ENCODE measurements at regions of chr15 and their contacts with region 1.

Region 1: DNA sequence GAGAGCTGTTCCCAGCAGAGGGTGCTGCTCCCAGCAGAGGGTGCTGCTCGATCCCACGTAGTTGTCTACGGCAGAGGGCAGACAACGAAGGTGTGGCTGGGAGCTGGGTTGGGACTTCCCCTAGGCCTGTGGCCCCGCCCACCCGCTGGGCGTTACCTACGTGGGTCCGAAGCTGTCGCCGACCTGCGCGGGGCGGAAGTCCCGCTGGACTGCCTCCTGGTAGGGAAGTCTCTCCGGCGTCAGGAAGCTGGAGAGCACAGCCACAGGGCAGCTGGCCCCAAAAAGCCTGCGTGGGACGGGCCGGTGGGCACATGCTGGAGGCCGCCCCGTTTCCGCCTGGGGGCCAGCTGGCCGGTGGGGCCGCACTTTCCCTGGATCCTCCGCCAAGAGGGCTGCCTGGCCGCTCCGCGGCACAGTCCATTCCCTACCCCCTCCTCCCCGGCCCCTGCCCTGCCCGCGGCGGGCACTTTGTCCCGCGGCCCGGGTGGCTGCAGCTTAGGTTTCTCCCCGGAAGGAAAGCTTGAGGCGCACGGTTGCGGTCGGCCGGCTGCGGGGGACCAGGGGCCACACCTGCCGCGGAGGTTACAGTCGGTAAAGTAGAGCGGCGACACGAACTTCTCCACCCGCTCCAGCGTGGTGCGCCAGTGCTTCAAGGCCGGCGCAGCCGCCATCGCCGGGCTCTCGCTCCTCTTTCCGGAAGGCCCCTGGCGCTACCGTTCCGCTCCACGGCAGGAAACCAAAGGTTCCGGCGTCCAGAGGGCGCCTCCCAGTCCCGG is at the start of gene MAN2C1:
- DNase-seq: peak; percentile 97
- ATAC-seq: peak; percentile 94
- H3K4me3 Mint-ChIP-seq: peak within 1 kb of the TSS; percentile 86
- H3K27ac Mint-ChIP-seq: peak within 1 kb of the TSS; percentile 95
- H3K4me1 Mint-ChIP-seq: peaks cover 26% of the 10 kb centered on the region
- H3K27me3 Mint-ChIP-seq: no peaks in the 10 kb centered on the region
- total RNA-seq, gene MAN2C1: 119 to 181 TPM

Region 2: GRCh38 chr15:75335705-75336355 is 32.3 kb before region 1 on chr15 and contains the start of gene COMMD4:
- CTCF ChIA-PET with region 1: interaction called, 10 read pairs
- POLR2A ChIA-PET with region 1: no interaction called
- intact Hi-C with region 1: loop called in 1 of 2 experiments (anchors 1 kb)
- DNase-seq: peak; percentile 95
- ATAC-seq: peak; percentile 88
- H3K4me3 Mint-ChIP-seq: peak within 1 kb of the TSS; percentile 94
- H3K27ac Mint-ChIP-seq: peak within 1 kb of the TSS; percentile 88
- H3K4me1 Mint-ChIP-seq: peaks cover 12% of the 10 kb centered on the region
- H3K27me3 Mint-ChIP-seq: no peaks in the 10 kb centered on the region
- total RNA-seq, gene COMMD4: 47.1 to 67.8 TPM

Region 3: DNA sequence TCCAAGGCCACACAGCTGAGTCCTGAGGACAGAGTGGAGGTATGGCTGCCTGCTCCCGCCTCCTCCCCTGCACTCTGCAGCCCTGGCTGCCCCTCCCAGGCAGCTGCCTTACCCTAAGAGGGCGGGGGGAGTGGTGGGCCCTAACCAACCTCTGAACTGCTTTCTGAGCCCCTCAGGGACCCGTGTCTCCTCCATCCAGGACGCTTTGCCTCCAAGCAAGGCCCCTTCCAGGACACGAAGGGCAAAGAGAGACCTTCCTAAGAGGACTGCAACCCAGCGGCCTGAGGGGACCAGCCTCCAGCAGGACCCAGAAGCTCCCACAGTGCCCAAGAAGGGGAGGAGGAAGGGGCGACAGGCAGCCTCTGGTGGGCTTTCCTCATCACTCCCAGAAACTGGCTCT is 13.6 kb before region 1 on chr15:
- CTCF ChIA-PET with region 1: interaction called, 10 read pairs
- POLR2A ChIA-PET with region 1: interaction called, 8 read pairs
- intact Hi-C with region 1: no loop called
- DNase-seq: no peak
- ATAC-seq: no peak
- H3K4me3 Mint-ChIP-seq: no peak overlapping the region
- H3K27ac Mint-ChIP-seq: no peak overlapping the region
- H3K4me1 Mint-ChIP-seq: peaks cover 16% of the 10 kb centered on the region
- H3K27me3 Mint-ChIP-seq: no peaks in the 10 kb centered on the region

Region 4: GRCh38 chr15:75578948-75579920 is 211.1 kb after region 1 on chr15 and contains the start of gene PTPN9:
- CTCF ChIA-PET with region 1: interaction called, 3 read pairs
- POLR2A ChIA-PET with region 1: no interaction called
- intact Hi-C with region 1: loop called in 1 of 2 experiments (anchors 1 kb)
- DNase-seq: peak; percentile 88
- ATAC-seq: peak; percentile 80
- H3K4me3 Mint-ChIP-seq: peak within 1 kb of the TSS; percentile 87
- H3K27ac Mint-ChIP-seq: peak within 1 kb of the TSS; percentile 94
- H3K4me1 Mint-ChIP-seq: peaks cover 13% of the 10 kb centered on the region
- H3K27me3 Mint-ChIP-seq: no peaks in the 10 kb centered on the region
- total RNA-seq, gene PTPN9: 15.0 to 16.5 TPM

Region 5: DNA sequence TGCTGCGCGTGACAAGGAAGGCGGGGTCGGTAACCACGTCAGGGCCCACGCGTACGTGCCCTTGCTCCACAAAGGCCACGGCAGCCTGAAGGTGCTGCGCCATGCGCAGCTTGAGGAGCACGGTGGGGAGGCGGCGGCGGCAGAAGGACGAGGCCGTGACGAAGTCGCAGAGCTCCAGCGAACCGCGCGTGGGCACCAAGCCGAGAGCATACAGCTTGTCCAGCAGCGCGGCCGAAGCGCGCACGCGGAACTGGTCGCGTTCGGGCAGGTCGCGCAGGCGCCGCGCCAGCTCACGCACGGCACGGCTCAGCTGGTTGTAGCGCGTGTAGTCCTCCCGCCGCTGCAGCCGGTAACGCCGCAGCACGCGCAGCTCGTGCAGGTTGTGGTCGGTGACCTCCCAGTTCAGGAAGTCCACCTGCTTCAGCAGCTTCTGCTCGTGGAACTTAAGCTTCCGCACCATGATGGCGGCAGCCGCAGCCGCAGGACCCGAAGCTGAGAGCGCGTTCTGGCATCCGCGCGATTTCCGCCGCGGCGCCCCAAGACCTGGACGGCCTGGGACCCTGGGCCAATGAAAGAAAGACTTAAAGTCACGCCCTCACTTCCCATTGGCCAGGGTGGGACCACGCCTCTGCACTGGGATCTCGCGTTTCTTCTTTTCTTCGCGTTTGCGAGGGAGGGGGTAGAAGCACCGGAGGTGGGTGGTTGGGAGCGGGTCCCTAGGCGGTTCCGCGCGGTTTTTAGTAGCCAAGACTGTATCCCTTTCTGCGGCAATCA is 271.8 kb after region 1 on chr15 and contains the start of gene IMP3:
- CTCF ChIA-PET with region 1: interaction called, 37 read pairs
- POLR2A ChIA-PET with region 1: interaction called, 15 read pairs
- intact Hi-C with region 1: loop called (anchors 1 kb)
- DNase-seq: peak; percentile 96
- ATAC-seq: peak; percentile 92
- H3K4me3 Mint-ChIP-seq: peak within 1 kb of the TSS; percentile 99
- H3K27ac Mint-ChIP-seq: peak within 1 kb of the TSS; percentile 96
- H3K4me1 Mint-ChIP-seq: peaks cover 25% of the 10 kb centered on the region
- H3K27me3 Mint-ChIP-seq: no peaks in the 10 kb centered on the region
- total RNA-seq, gene IMP3: 80.3 to 87.5 TPM

Region 6: GRCh38 chr15:75684642-75685041 is 316.5 kb after region 1 on chr15:
- CTCF ChIA-PET with region 1: interaction called, 9 read pairs
- POLR2A ChIA-PET with region 1: no interaction called
- intact Hi-C with region 1: loop called (anchors 1 kb)
- DNase-seq: no peak
- ATAC-seq: no peak
- H3K4me3 Mint-ChIP-seq: no peak overlapping the region
- H3K27ac Mint-ChIP-seq: no peak overlapping the region
- H3K4me1 Mint-ChIP-seq: no peaks in the 10 kb centered on the region
- H3K27me3 Mint-ChIP-seq: peaks cover 2% of the 10 kb centered on the region

Measured in activated CD4-positive, alpha-beta T cell treated with anti-CD3 and anti-CD28 coated beads for 36 hours (primary cell).